ENCODE measurements at regions of chr17 and their contacts with region 1.

Region 1: GRCh38 chr17:81507433-81508190 is 5.0 kb downstream of the ACTG1 start:
- DNase-seq: no peak
- H3K4me3 ChIP-seq: no peak overlapping the region
- H3K27me3 ChIP-seq: no peaks in the 10 kb centered on the region
- CTCF ChIP-seq: no peak

Region 2: DNA sequence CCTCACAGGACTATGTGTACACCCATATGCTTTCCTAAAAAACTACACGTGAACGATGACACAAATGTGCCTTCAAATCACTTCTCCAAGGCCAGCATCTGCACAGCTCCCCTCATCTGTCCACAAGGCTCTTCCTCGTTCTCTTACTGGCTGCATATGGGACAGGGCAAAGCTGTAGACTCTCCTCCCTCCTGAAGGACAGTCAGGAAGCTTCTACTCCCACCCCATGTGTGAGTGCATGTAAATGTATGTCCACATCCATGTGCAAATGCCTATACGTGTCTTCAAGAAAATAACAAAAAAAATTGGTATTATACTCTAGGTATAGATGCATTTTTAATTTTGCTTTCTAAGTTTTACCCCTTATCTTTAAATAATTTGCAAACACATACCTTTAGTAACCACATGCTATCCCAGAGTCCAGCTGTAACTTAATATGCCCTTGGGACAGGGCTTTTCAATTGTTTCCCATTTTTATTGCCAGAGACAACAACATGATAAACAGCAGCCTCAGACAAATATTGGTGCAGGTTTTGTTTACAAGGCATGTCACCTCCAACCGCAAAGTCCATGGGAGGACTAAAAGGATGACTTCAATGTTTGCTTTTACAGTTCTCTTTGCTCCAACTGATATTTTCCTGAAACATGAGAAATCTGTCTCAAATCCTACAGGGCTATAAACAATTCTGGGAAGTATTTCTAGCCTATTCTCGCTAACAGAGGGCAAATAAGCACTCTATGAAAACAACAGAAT is 76.2 kb after region 1 on chr17:
- CTCF ChIA-PET with region 1: no interaction called
- POLR2A ChIA-PET with region 1: interaction called, 12 read pairs
- DNase-seq: no peak
- H3K4me3 ChIP-seq: no peak overlapping the region
- H3K27me3 ChIP-seq: no peaks in the 10 kb centered on the region
- CTCF ChIP-seq: no peak